Dorsolateral prefrontal cortex (tissue), 120 donors: ENCODE measurements at regions of chr3 and their contacts with region 1.

Region 1: DNA sequence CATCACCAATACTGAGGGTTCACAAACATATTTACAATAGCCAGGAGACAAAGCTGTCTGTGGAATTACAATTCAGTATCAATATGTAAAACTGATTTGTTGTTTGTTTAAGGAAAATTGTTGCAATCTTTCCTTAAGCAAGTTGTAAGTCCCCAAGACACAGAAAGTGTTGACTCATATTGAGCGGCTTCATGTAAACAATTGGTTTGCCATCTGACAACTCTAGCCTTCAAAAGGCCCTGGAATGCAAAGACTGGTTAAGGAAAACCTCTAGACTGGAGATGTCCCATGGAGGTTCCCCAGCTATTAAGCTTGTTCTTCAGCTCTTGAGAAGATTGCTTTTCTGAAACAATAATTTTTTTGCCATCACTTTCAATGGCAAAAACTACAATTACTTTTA is 283.7 kb upstream of the PROK2 start:
- DNase-seq: no peak
- H3K4me3 ChIP-seq: no peak overlapping the region
- H3K27ac ChIP-seq: no peak overlapping the region
- H3K27me3 ChIP-seq: no peaks in the 10 kb centered on the region
- CTCF ChIP-seq: no peak

Region 2: GRCh38 chr3:71601811-71602210 is 466.8 kb before region 1 on chr3:
- intact Hi-C with region 1: no loop called
- DNase-seq: no peak
- H3K4me3 ChIP-seq: no peak overlapping the region
- H3K27ac ChIP-seq: no peak overlapping the region
- H3K27me3 ChIP-seq: peaks cover 0 to 2% (median 0%) of the 10 kb centered on the region in 45 donors
- CTCF ChIP-seq: no peak

Region 3: GRCh38 chr3:71710906-71711494 is 357.6 kb before region 1 on chr3:
- intact Hi-C with region 1: no loop called
- DNase-seq: no peak
- H3K4me3 ChIP-seq: no peak overlapping the region
- H3K27ac ChIP-seq: peak overlapping the region in 16 of 59 donors; percentile 4 to 94 (median 40)
- H3K27me3 ChIP-seq: no peaks in the 10 kb centered on the region
- CTCF ChIP-seq: peak; percentile 32 to 86 (median 72)

Region 4: GRCh38 chr3:71859123-71859519 is 209.5 kb before region 1 on chr3:
- intact Hi-C with region 1: no loop called
- DNase-seq: no peak
- H3K4me3 ChIP-seq: no peak overlapping the region
- H3K27ac ChIP-seq: no peak overlapping the region
- H3K27me3 ChIP-seq: peaks cover 0 to 4% (median 0%) of the 10 kb centered on the region in 45 donors
- CTCF ChIP-seq: peak in 53 of 56 donors; percentile 18 to 79 (median 52)

Region 5: GRCh38 chr3:72018343-72018984 is 50.2 kb before region 1 on chr3:
- intact Hi-C with region 1: no loop called
- DNase-seq: no peak
- H3K4me3 ChIP-seq: no peak overlapping the region
- H3K27ac ChIP-seq: no peak overlapping the region
- H3K27me3 ChIP-seq: no peaks in the 10 kb centered on the region
- CTCF ChIP-seq: no peak

Region 6: GRCh38 chr3:72152551-72153476 is 84.2 kb after region 1 on chr3:
- intact Hi-C with region 1: loop called in 1 of 2 experiments (anchors 10 kb)
- DNase-seq: peak; percentile 41 to 73 (median 58)
- H3K4me3 ChIP-seq: peak overlapping the region; percentile 0 to 70 (median 48)
- H3K27ac ChIP-seq: peak overlapping the region; percentile 73 to 98 (median 94)
- H3K27me3 ChIP-seq: no peaks in the 10 kb centered on the region
- CTCF ChIP-seq: peak in 3 of 56 donors; percentile 9 to 22 (median 18)